Aorta (tissue), 5 donors: ENCODE measurements at regions of chr2 and their contacts with region 1.

Region 1: GRCh38 chr2:58448065-58448507 is 207.0 kb upstream of the FANCL start:
- DNase-seq: no peak
- ATAC-seq: peak; percentile 52
- H3K4me3 ChIP-seq: no peak overlapping the region
- H3K27ac ChIP-seq: no peak overlapping the region
- H3K4me1 ChIP-seq: no peaks in the 10 kb centered on the region
- H3K27me3 ChIP-seq: peaks cover 0 to 1% of the 10 kb centered on the region in 2 donors

Region 2: DNA sequence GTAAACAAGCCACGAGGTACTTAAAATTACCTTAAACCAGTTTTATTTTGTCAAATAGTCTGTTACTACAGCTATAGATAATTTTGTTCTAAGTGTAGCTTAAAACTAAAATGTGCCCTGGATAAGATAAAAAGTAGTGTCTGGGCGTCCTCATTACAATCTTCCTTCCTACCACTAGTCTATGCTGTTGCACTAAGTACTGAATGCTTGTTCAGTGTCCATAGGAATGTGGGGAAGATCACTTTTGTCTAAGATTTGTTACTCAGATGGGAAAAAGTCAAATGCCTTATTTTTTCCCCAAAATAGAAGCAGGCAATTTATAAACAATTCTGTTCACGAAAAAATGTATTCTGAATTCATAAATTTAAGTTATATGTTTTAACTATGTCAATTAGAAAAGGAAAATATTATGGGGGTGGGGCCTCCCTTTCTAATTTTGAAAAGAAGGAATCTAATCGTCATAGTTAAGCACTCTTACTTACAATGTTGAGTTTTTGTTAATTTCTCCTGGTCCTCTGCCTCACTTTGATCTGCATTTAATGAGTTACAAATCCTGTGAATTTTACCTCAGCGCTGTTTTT is 541.8 kb before region 1 on chr2:
- intact Hi-C with region 1: loop called in 1 of 2 experiments (anchors 10 kb)
- DNase-seq: no peak
- ATAC-seq: peak; percentile 76
- H3K4me3 ChIP-seq: no peak overlapping the region
- H3K27ac ChIP-seq: no peak overlapping the region
- H3K4me1 ChIP-seq: no peaks in the 10 kb centered on the region
- H3K27me3 ChIP-seq: peaks cover 0 to 1% of the 10 kb centered on the region in 2 donors